ENCODE measurements at regions of chr2 and their contacts with region 1.

Region 1: GRCh38 chr2:143284087-143284675 is 155.0 kb downstream of the ARHGAP15 start:
- DNase-seq: peak; percentile 42
- ATAC-seq: peak; percentile 67
- H3K4me3 Mint-ChIP-seq: no peak overlapping the region
- H3K27ac Mint-ChIP-seq: peak overlapping the region; percentile 3
- H3K4me1 Mint-ChIP-seq: peaks cover 27% of the 10 kb centered on the region
- H3K27me3 Mint-ChIP-seq: no peaks in the 10 kb centered on the region

Region 2: GRCh38 chr2:143264851-143265250 is 19.3 kb before region 1 on chr2:
- CTCF ChIA-PET with region 1: interaction called, 22 read pairs
- POLR2A ChIA-PET with region 1: interaction called, 3 read pairs
- intact Hi-C with region 1: no loop called
- DNase-seq: no peak
- ATAC-seq: no peak
- H3K4me3 Mint-ChIP-seq: no peak overlapping the region
- H3K27ac Mint-ChIP-seq: no peak overlapping the region
- H3K4me1 Mint-ChIP-seq: peaks cover 47% of the 10 kb centered on the region
- H3K27me3 Mint-ChIP-seq: no peaks in the 10 kb centered on the region

Region 3: DNA sequence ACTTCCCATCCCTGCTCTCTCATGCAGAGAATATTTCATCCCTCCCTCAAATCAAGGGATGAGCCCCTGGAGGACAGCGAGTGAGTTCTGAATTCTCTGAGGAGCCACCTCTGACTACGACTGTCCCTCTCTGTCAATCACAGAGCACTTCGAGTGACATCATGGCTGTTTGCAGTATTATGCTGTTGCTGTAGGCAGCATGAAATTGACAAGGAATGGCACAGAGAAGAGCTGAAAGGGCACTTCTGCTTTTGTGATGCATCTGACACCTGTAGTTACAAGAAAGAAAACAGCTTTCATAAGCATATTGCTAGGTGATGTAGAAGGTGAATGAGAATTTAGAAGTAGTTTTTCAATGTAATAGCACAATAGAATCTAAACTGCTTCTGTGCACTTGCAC is 11.9 kb after region 1 on chr2:
- CTCF ChIA-PET with region 1: interaction called, 27 read pairs
- POLR2A ChIA-PET with region 1: no interaction called
- intact Hi-C with region 1: no loop called
- DNase-seq: no peak
- ATAC-seq: peak; percentile 9
- H3K4me3 Mint-ChIP-seq: no peak overlapping the region
- H3K27ac Mint-ChIP-seq: no peak overlapping the region
- H3K4me1 Mint-ChIP-seq: peaks cover 20% of the 10 kb centered on the region
- H3K27me3 Mint-ChIP-seq: no peaks in the 10 kb centered on the region

Region 4: GRCh38 chr2:143582046-143582747 is 298.0 kb after region 1 on chr2:
- CTCF ChIA-PET with region 1: no interaction called
- POLR2A ChIA-PET with region 1: no interaction called
- intact Hi-C with region 1: no loop called
- DNase-seq: no peak
- ATAC-seq: no peak
- H3K4me3 Mint-ChIP-seq: no peak overlapping the region
- H3K27ac Mint-ChIP-seq: no peak overlapping the region
- H3K4me1 Mint-ChIP-seq: peaks cover 19% of the 10 kb centered on the region
- H3K27me3 Mint-ChIP-seq: no peaks in the 10 kb centered on the region

Measured in activated CD4-positive, alpha-beta T cell treated with anti-CD3 and anti-CD28 coated beads for 36 hours (primary cell).